AG04449 (cell line): ENCODE measurements at regions of chr4 and their contacts with region 1.

Region 1: GRCh38 chr4:15882675-15883086 is 55.9 kb downstream of the FGFBP1 start:
- DNase-seq: peak; percentile 38
- H3K4me3 ChIP-seq: no peak overlapping the region
- CTCF ChIP-seq: peak; percentile 91

Region 2: GRCh38 chr4:15303052-15303641 is 579.5 kb before region 1 on chr4:
- CTCF ChIA-PET with region 1: no interaction called
- POLR2A ChIA-PET with region 1: no interaction called
- DNase-seq: peak; percentile 87
- H3K4me3 ChIP-seq: no peak overlapping the region
- CTCF ChIP-seq: no peak

Region 3: GRCh38 chr4:15771216-15772058 is 111.2 kb before region 1 on chr4:
- CTCF ChIA-PET with region 1: no interaction called
- POLR2A ChIA-PET with region 1: no interaction called
- DNase-seq: no peak
- H3K4me3 ChIP-seq: no peak overlapping the region
- CTCF ChIP-seq: no peak

Region 4: DNA sequence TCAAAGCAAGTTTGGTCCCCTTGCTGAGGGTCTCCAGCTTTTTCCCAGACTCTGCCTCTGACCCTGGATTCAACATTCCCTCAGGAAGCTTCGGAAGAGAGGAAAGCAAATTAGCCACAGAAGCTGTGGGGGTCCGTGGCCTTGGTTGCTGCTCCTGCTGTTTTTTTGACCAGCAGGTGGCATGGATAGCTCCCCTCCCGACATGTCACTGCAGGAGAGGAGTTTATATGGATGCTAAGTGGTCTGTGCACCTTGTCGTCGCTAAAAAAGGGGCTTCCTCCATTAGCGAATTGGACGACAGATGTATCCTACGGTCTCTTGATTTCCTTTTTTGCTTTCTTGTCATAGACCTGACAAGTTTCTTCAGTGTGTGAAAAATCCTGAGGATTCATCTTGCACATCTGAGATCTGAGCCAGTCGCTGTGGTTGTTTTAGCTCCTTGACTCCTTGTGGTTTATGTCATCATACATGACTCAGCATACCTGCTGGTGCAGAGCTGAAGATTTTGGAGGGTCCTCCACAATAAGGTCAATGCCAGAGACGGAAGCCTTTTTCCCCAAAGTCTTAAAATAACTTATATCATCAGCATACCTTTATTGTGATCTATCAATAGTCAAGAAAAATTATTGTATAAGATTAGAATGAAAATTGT is 34.4 kb before region 1 on chr4:
- CTCF ChIA-PET with region 1: interaction called, 14 read pairs
- POLR2A ChIA-PET with region 1: no interaction called
- DNase-seq: no peak
- H3K4me3 ChIP-seq: no peak overlapping the region
- CTCF ChIP-seq: no peak

Region 5: DNA sequence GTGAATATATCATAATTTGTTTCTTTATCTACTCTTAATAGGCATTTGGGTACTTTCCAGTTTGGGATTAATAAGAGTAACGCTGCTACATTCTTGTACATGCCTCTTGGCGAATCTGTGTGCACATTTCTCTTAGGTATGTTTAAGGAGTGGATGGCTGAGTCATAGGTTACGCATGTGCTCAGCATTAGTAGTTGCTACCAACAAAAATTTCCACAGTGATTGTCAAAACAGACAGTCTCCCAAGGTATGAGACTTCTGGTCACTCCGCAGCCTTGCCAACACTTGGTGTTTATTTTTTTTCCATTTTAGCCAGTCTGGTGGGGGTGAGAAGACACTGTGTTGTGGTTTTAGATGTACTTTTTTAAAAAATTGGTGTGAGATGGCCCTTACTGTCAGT is 11.3 kb after region 1 on chr4:
- CTCF ChIA-PET with region 1: interaction called, 68 read pairs
- POLR2A ChIA-PET with region 1: no interaction called
- DNase-seq: peak; percentile 95
- H3K4me3 ChIP-seq: no peak overlapping the region
- CTCF ChIP-seq: no peak

Region 6: GRCh38 chr4:15920723-15921591 is 38.3 kb after region 1 on chr4:
- CTCF ChIA-PET with region 1: interaction called, 20 read pairs
- POLR2A ChIA-PET with region 1: no interaction called
- DNase-seq: peak; percentile 91
- H3K4me3 ChIP-seq: no peak overlapping the region; the same call in 1 of the 2 replicates
- CTCF ChIP-seq: no peak

Region 7: GRCh38 chr4:15945516-15945915 is 62.8 kb after region 1 on chr4:
- CTCF ChIA-PET with region 1: interaction called, 574 read pairs
- POLR2A ChIA-PET with region 1: no interaction called
- DNase-seq: no peak
- H3K4me3 ChIP-seq: no peak overlapping the region
- CTCF ChIP-seq: no peak

Region 8: DNA sequence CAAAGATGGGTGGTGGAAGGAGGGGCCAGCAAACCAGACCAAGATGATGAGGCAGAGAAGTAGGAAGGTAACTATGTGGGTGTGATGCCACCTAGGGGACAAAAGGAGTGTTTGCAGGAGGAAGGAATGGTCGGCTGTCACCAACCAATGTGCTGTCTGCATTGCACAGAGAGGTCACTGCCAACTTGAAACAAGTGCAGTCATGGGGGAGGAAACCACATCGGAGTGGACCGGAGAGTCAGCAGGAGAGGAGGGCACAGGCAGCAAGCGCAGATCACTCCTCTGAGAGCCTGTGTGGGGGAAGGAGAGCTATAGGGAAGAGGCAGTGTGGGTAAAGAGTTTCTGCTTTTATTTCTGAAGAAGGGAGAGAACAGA is 118.8 kb after region 1 on chr4:
- CTCF ChIA-PET with region 1: interaction called, 39 read pairs
- POLR2A ChIA-PET with region 1: no interaction called
- DNase-seq: peak; percentile 14
- H3K4me3 ChIP-seq: no peak overlapping the region
- CTCF ChIP-seq: peak; percentile 87

Region 9: DNA sequence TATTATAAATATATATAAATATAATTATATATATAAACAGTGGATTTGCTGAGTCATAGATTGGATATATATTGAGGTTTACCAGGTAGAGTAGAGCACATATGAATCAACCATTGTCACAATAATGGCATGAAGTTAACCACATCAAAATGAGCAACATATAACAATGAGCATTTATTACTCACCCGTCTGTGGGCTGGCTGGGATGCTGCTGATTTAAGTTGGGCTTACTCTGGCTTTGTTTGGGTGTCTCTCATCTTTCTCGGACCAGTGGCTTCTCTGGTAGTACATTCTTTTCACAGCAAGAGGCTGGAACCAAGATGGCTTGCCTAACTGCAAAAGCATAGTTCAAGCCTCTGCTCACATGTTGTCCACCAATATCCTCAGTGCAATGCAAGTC is 455.3 kb after region 1 on chr4:
- CTCF ChIA-PET with region 1: no interaction called
- POLR2A ChIA-PET with region 1: no interaction called
- DNase-seq: no peak
- H3K4me3 ChIP-seq: no peak overlapping the region
- CTCF ChIP-seq: no peak